ENCODE measurements at regions of chr1 and their contacts with region 1.

Region 1: DNA sequence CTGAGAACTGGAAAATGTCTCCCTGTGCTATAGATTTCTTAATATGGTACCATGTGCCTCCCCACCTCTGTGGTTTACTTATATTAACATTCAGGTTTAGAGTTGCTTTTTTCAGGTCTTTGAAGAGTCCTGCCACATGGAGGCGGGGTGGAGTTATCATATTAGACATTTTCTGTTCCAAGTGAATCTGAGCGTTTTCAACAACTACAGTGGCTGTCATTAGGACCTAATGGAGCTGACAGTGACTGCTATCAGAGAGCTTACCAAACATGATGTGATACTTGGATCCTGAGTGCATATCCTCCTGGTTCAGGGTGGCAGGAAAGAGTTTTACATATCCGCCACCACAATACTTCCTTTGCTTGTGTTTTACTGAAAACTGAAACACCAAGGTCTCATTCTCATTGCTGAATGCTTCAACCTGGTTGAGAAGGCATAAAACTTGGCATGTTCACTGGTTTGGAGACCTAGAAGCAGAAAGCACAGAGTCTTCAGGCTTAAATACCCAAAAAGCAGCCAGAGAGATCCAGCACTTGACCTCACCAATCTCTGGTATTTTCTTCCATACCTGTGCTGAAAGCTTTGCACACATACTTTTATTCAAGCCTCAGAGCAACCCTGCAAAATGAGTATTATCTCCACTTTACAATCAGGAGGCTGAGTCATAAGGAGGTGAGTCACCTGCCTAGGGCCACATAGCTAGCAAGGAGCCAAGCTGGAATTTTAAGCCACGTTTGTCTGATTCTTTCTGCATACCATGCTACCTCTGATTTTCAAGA is 47.4 kb upstream of the OSBPL9 start:
- DNase-seq: peak in 7 of 9 donors; percentile 11 to 37 (median 28)
- ATAC-seq: peak; percentile 71
- H3K4me3 ChIP-seq: peak overlapping the region; percentile 3
- H3K4me3 Mint-ChIP-seq: peak overlapping the region in 9 of 10 donors; percentile 31 to 71 (median 61)
- H3K27ac ChIP-seq: peak overlapping the region; percentile 48
- H3K27ac Mint-ChIP-seq: peak overlapping the region; percentile 67 to 92 (median 83)
- H3K4me1 ChIP-seq: peaks cover 22 to 24% of the 10 kb centered on the region in 2 donors
- H3K4me1 Mint-ChIP-seq: peaks cover 18 to 37% (median 28%) of the 10 kb centered on the region in 7 donors
- H3K27me3 ChIP-seq: no peaks in the 10 kb centered on the region
- H3K27me3 Mint-ChIP-seq: no peaks in the 10 kb centered on the region

Region 2: GRCh38 chr1:50968158-50968820 is 601.2 kb before region 1 on chr1:
- CTCF ChIA-PET with region 1: no interaction called
- POLR2A ChIA-PET with region 1: no interaction called
- intact Hi-C with region 1: loop called in 1 of 2 experiments (anchors 2 kb)
- DNase-seq: peak; percentile 67 to 86 (median 85)
- ATAC-seq: peak; percentile 89
- H3K4me3 ChIP-seq: peak overlapping the region; percentile 83
- H3K4me3 Mint-ChIP-seq: peak overlapping the region; percentile 92 to 99 (median 98)
- H3K27ac ChIP-seq: peak overlapping the region; percentile 96
- H3K27ac Mint-ChIP-seq: peak overlapping the region; percentile 71 to 100 (median 91)
- H3K4me1 ChIP-seq: peaks cover 6 to 15% of the 10 kb centered on the region in 2 donors
- H3K4me1 Mint-ChIP-seq: peaks cover 18 to 29% (median 26%) of the 10 kb centered on the region in 7 donors
- H3K27me3 ChIP-seq: no peaks in the 10 kb centered on the region
- H3K27me3 Mint-ChIP-seq: peaks cover 0 to 12% (median 2%) of the 10 kb centered on the region in 5 donors

Region 3: DNA sequence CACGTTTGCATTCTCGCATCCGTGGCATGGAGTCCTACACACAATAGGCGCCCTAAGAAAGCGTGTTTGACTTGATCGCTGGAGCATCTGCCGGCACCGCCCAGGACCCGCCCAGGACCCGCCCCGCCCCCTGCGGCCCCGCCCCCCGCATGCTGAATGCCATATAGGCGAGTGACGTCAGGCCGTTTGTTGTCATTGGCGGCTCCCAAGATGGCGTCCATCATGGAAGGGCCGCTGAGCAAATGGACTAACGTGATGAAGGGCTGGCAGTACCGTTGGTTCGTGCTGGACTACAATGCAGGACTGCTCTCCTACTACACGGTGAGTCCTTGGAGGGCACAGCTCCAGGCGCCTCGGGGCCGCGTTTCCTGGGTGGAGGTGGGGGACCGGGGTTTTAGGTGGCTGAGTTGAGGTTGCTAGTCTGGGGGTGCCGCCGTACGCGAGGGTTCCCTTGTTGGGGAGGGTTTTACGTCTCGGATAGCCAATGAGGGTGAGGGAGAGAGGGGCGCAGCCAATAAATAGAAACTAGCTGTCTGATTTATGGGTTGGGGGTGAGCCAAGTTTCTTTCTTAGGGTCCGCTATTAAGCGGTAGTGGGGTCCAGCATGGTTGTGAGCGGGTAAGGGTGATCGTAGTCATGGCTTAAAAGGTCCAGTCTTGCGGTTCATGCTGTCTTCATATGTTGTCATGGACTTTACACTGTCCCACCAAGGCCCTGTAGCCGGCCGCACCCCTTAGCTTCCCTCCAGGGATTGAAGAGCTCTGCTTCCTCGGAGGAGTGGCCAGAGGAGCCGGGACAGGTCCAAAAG is 47.6 kb after region 1 on chr1 and contains the start of gene OSBPL9:
- CTCF ChIA-PET with region 1: no interaction called
- POLR2A ChIA-PET with region 1: interaction called, 3 read pairs
- intact Hi-C with region 1: loop called (anchors 1 to 2 kb)
- DNase-seq: peak; percentile 69 to 89 (median 84)
- ATAC-seq: peak; percentile 98
- H3K4me3 ChIP-seq: peak within 1 kb of the TSS; percentile 95
- H3K4me3 Mint-ChIP-seq: peak within 1 kb of the TSS; percentile 98 to 100 (median 99)
- H3K27ac ChIP-seq: peak within 1 kb of the TSS; percentile 86
- H3K27ac Mint-ChIP-seq: peak within 1 kb of the TSS; percentile 94 to 100 (median 99)
- H3K4me1 ChIP-seq: peaks cover 6 to 15% of the 10 kb centered on the region in 2 donors
- H3K4me1 Mint-ChIP-seq: peaks cover 22 to 60% (median 48%) of the 10 kb centered on the region in 7 donors
- H3K27me3 ChIP-seq: no peaks in the 10 kb centered on the region
- H3K27me3 Mint-ChIP-seq: peaks cover 0 to 6% (median 3%) of the 10 kb centered on the region in 5 donors
- total RNA-seq, gene OSBPL9: 44.5 to 56.9 (median 46.6) TPM

Measured in naive thymus-derived CD4-positive, alpha-beta T cell (primary cell).